ENCODE measurements at regions of chr9 and their contacts with region 1.

Region 1: DNA sequence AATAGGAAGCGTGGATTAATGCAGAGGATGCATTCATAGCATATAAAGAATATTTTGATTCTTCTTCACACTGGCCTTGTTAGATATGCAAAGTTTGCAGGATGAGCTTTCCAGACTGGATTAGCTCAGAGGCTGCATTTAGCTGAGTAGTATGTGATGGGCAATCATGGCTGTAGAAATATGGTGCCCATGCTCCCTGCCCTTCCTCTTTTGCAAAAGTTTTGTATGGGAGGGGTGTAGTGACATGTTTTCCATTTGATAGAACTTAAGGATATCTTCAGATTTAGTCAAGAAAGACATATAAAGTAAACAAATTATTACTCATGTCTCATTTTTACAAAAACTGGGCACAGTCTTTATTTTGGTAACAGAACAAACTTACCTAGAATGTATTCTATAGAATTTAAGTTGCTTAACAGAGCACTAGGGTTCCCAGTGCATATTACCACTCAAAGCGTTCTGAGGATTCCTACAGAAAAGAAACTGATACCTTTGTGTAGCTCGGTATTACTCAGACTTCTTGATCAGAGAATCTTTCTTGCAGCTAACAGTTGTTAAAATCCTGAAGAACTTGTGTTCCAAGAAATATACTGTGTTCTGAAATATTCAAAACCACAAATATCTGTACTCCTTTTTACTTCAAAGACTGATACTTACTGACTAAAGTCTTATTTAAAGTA is 9.8 kb downstream of the GTF3C4 start:
- DNase-seq: no peak
- ATAC-seq: no peak
- H3K4me3 Mint-ChIP-seq: no peak overlapping the region
- H3K27ac Mint-ChIP-seq: no peak overlapping the region
- H3K4me1 Mint-ChIP-seq: peaks cover 2% of the 10 kb centered on the region
- H3K27me3 Mint-ChIP-seq: no peaks in the 10 kb centered on the region
- CTCF ChIP-seq: no peak

Region 2: DNA sequence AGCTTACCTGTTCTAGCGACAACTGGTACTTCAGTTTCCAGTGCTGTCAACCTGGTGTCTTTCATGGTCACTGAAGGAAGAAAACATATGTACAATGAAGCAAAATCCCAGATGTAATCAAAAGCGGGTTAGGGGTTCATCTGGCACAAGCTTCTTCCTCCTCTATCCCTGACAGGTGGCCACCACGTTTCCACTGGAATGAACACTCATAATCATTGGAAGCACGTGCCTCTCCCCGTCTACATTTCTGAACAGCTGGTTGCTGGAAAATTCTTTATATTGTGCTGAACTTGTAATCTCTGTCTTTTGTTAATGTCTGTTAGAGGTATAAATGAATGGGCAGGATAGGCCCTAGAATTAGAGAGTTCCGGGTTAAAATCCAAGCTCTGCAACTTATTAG is 254.9 kb after region 1 on chr9:
- CTCF ChIA-PET with region 1: no interaction called
- POLR2A ChIA-PET with region 1: interaction called, 11 read pairs
- intact Hi-C with region 1: no loop called
- DNase-seq: no peak
- ATAC-seq: no peak
- H3K4me3 Mint-ChIP-seq: no peak overlapping the region
- H3K27ac Mint-ChIP-seq: no peak overlapping the region
- H3K4me1 Mint-ChIP-seq: no peaks in the 10 kb centered on the region
- H3K27me3 Mint-ChIP-seq: no peaks in the 10 kb centered on the region
- CTCF ChIP-seq: no peak